Activated CD4-positive, alpha-beta T cell treated with anti-CD3 and anti-CD28 coated beads for 36 hours (primary cell): ENCODE measurements at regions of chr1 and their contacts with region 1.

Region 1: GRCh38 chr1:43367904-43368645 is at the start of gene ELOVL1:
- DNase-seq: peak; percentile 94
- ATAC-seq: peak; percentile 83
- H3K4me3 Mint-ChIP-seq: peak within 1 kb of the TSS; percentile 90
- H3K27ac Mint-ChIP-seq: peak within 1 kb of the TSS; percentile 93
- H3K4me1 Mint-ChIP-seq: peaks cover 30% of the 10 kb centered on the region
- H3K27me3 Mint-ChIP-seq: no peaks in the 10 kb centered on the region
- total RNA-seq, gene ELOVL1: 56.0 to 72.1 TPM

Region 2: GRCh38 chr1:42420911-42421585 is 947.0 kb before region 1 on chr1:
- CTCF ChIA-PET with region 1: no interaction called
- POLR2A ChIA-PET with region 1: no interaction called
- intact Hi-C with region 1: no loop called
- DNase-seq: no peak
- ATAC-seq: no peak
- H3K4me3 Mint-ChIP-seq: no peak overlapping the region
- H3K27ac Mint-ChIP-seq: no peak overlapping the region
- H3K4me1 Mint-ChIP-seq: no peaks in the 10 kb centered on the region
- H3K27me3 Mint-ChIP-seq: peaks cover 2% of the 10 kb centered on the region

Region 3: GRCh38 chr1:42681741-42682483 is 686.2 kb before region 1 on chr1 and contains the start of gene YBX1:
- CTCF ChIA-PET with region 1: no interaction called
- POLR2A ChIA-PET with region 1: no interaction called
- intact Hi-C with region 1: loop called in 1 of 2 experiments (anchors 5 kb)
- DNase-seq: peak; percentile 96
- ATAC-seq: peak; percentile 97
- H3K4me3 Mint-ChIP-seq: peak within 1 kb of the TSS; percentile 93
- H3K27ac Mint-ChIP-seq: peak within 1 kb of the TSS; percentile 97
- H3K4me1 Mint-ChIP-seq: peaks cover 41% of the 10 kb centered on the region
- H3K27me3 Mint-ChIP-seq: no peaks in the 10 kb centered on the region
- total RNA-seq, gene YBX1: 1,224 to 1,435 TPM

Region 4: GRCh38 chr1:43348809-43349583 is 19.1 kb before region 1 on chr1:
- CTCF ChIA-PET with region 1: interaction called, 5 read pairs
- POLR2A ChIA-PET with region 1: no interaction called
- intact Hi-C with region 1: loop called in 1 of 2 experiments (anchors 1 kb)
- DNase-seq: peak; percentile 89
- ATAC-seq: peak; percentile 89
- H3K4me3 Mint-ChIP-seq: peak overlapping the region; percentile 71
- H3K27ac Mint-ChIP-seq: peak overlapping the region; percentile 72
- H3K4me1 Mint-ChIP-seq: peaks cover 19% of the 10 kb centered on the region
- H3K27me3 Mint-ChIP-seq: no peaks in the 10 kb centered on the region

Region 5: GRCh38 chr1:43389326-43390313 is 21.5 kb after region 1 on chr1 and contains the starts of genes MED8 and SZT2:
- CTCF ChIA-PET with region 1: interaction called, 3 read pairs
- POLR2A ChIA-PET with region 1: interaction called, 3 read pairs
- intact Hi-C with region 1: loop called (anchors 1 kb)
- DNase-seq: peak; percentile 94
- ATAC-seq: peak; percentile 93
- H3K4me3 Mint-ChIP-seq: peak within 1 kb of the TSS; percentile 99
- H3K27ac Mint-ChIP-seq: peak within 1 kb of the TSS; percentile 97
- H3K4me1 Mint-ChIP-seq: peaks cover 39% of the 10 kb centered on the region
- H3K27me3 Mint-ChIP-seq: no peaks in the 10 kb centered on the region
- total RNA-seq, gene MED8: 32.3 to 36.6 TPM
- total RNA-seq, gene SZT2: 33.6 to 36.3 TPM

Region 6: DNA sequence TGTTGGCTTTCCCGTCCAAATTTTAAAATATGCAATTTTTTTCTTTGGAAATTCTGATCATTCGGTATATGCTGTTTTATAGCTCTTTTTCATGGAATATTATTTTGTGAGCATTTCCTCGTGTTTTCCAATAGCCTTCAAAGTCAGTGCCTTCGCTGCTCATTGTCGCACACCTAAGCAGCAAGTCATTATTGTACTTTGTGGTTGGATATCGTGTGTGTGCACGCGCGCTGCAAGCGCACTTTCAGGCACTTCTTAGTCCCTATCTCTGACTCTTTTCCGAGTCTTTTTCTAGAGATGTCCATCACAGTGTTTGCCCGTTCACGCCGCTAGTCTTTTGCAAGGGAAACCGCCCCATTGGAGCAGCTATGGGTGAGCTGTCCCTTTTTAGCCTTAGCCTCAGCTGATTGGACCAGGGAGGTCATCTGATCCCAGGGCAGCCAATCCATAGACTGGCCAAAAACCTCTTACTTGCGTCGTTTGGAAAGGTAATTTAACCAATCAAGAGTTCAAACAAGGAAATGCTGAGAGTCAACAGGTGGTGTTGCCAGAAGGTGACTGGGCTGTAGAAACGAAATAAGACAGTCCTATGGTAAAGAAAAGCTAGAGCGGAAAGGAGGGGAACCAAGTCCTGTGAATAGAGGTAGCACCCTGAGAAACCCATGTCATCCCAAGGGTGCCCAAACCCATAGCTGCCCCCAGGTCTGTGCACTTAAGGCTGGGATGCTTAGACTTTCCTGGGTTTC is 86.4 kb after region 1 on chr1:
- CTCF ChIA-PET with region 1: no interaction called
- POLR2A ChIA-PET with region 1: no interaction called
- intact Hi-C with region 1: loop called in 1 of 2 experiments (anchors 1 kb)
- DNase-seq: peak; percentile 78
- ATAC-seq: peak; percentile 92
- H3K4me3 Mint-ChIP-seq: peak overlapping the region; percentile 79
- H3K27ac Mint-ChIP-seq: peak overlapping the region; percentile 79
- H3K4me1 Mint-ChIP-seq: peaks cover 17% of the 10 kb centered on the region
- H3K27me3 Mint-ChIP-seq: peaks cover 16% of the 10 kb centered on the region

Region 7: GRCh38 chr1:44631647-44632539 is 1263.8 kb after region 1 on chr1:
- CTCF ChIA-PET with region 1: no interaction called
- POLR2A ChIA-PET with region 1: no interaction called
- intact Hi-C with region 1: loop called in 1 of 2 experiments (anchors 10 kb)
- DNase-seq: peak; percentile 95
- ATAC-seq: peak; percentile 81
- H3K4me3 Mint-ChIP-seq: peak overlapping the region; percentile 86
- H3K27ac Mint-ChIP-seq: peak overlapping the region; percentile 97
- H3K4me1 Mint-ChIP-seq: peaks cover 40% of the 10 kb centered on the region
- H3K27me3 Mint-ChIP-seq: no peaks in the 10 kb centered on the region